ENCODE measurements at regions of chr5 and their contacts with region 1.

Region 1: DNA sequence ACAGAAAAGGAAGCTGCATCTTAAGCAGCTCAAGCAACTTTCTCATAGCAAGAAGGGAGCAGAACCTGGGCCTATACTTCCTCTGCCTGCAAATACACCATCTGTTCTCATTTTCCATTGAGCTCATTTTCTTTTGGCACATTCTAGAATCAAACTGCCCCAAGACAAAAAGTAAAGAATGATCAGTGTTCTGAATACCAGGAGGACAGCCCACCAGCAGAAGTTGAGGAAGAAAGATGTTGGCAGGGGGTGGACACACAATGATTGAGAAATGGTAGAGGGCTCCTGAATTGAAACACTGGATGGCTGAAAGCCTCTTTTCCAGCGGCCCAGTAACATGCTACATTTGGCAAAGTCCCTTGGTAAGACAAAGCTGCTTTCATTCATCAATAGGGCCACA is 171.8 kb downstream of the MED10 start:
- DNase-seq: no peak
- H3K4me3 Mint-ChIP-seq: no peak overlapping the region
- H3K27ac Mint-ChIP-seq: no peak overlapping the region
- H3K4me1 Mint-ChIP-seq: no peaks in the 10 kb centered on the region
- H3K27me3 Mint-ChIP-seq: no peaks in the 10 kb centered on the region

Region 2: GRCh38 chr5:6568383-6568782 is 361.9 kb after region 1 on chr5:
- CTCF ChIA-PET with region 1: interaction called, 11 read pairs
- POLR2A ChIA-PET with region 1: no interaction called
- DNase-seq: no peak
- H3K4me3 Mint-ChIP-seq: no peak overlapping the region
- H3K27ac Mint-ChIP-seq: no peak overlapping the region
- H3K4me1 Mint-ChIP-seq: no peaks in the 10 kb centered on the region
- H3K27me3 Mint-ChIP-seq: peaks cover 7% of the 10 kb centered on the region

Measured in activated CD4-positive, alpha-beta T cell treated with anti-CD3 and anti-CD28 coated beads, Interleukin-2, amount 10 ng/mL, durations not matched to agents 7 days and 5 days (primary cell).